CD4-positive, alpha-beta memory T cell (primary cell): ENCODE measurements at regions of chr12 and their contacts with region 1.

Region 1: DNA sequence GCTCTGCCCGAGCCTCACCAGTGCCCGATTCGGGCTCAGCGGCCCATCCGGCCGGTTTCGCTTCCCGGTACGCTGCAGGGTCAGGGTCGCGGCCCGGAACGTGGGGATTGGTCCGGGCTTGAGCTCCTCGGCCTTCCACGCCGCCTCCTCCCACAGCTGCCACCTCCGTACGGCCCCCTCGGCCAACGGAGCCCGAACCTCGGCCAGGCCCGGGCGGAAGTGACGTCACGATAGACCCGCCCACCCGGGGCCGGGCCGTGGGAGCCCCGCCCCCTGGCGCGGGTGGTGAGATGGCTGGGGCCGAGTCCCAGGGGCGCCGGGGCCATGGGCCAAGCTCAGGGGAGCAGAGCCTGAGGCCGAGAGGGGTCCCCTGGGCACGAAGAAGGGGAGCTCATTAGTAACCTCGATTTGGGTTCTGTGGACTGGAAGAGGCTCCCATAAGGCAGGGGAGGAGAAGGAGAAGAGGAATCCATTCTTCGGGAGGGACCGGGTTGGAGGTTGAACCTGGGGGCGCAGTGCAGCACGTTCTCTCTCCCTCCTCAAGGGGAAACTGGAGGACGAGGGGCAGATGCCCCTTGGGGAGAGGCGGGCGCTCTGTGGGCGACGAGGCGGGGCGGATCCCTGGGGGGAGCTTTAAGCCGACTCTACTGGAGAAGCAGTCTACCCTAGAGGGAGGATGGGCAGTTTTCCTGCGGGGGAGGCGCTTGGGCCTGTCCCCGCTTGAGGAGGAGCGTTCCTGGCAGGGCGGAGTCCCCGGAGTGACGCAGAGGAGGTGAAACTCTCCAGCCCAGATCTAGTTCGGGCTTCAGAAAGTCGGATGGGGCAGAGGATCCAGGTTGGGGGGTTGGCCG is at the start of gene MLF2:
- DNase-seq: peak; percentile 96 to 98 (median 97)
- H3K4me3 ChIP-seq: peak within 1 kb of the TSS; percentile 62 to 77
- H3K4me3 Mint-ChIP-seq: peak within 1 kb of the TSS; percentile 94 to 98 (median 96)
- H3K27ac ChIP-seq: peak within 1 kb of the TSS; percentile 84
- H3K27ac Mint-ChIP-seq: peak within 1 kb of the TSS; percentile 99 to 100 (median 99)
- H3K4me1 ChIP-seq: peaks cover 13% of the 10 kb centered on the region
- H3K4me1 Mint-ChIP-seq: peaks cover 10 to 24% (median 17%) of the 10 kb centered on the region in 4 donors
- H3K27me3 ChIP-seq: no peaks in the 10 kb centered on the region
- H3K27me3 Mint-ChIP-seq: peaks cover 0 to 1% of the 10 kb centered on the region in 2 donors
- total RNA-seq, gene MLF2: 79.8 to 80.3 TPM

Region 2: GRCh38 chr12:6632026-6632983 is 120.8 kb before region 1 on chr12:
- CTCF ChIA-PET with region 1: interaction called, 10 read pairs
- POLR2A ChIA-PET with region 1: no interaction called
- intact Hi-C with region 1: no loop called
- DNase-seq: peak; percentile 52 to 66 (median 62)
- H3K4me3 ChIP-seq: no peak overlapping the region
- H3K4me3 Mint-ChIP-seq: peak overlapping the region; percentile 82 to 93 (median 88)
- H3K27ac ChIP-seq: peak overlapping the region; percentile 63
- H3K27ac Mint-ChIP-seq: peak overlapping the region; percentile 91 to 98 (median 97)
- H3K4me1 ChIP-seq: peaks cover 50% of the 10 kb centered on the region
- H3K4me1 Mint-ChIP-seq: peaks cover 35 to 70% (median 52%) of the 10 kb centered on the region in 4 donors
- H3K27me3 ChIP-seq: no peaks in the 10 kb centered on the region
- H3K27me3 Mint-ChIP-seq: no peaks in the 10 kb centered on the region

Region 3: GRCh38 chr12:6647083-6647604 is 106.0 kb before region 1 on chr12 and contains the start of gene ACRBP:
- CTCF ChIA-PET with region 1: no interaction called
- POLR2A ChIA-PET with region 1: no interaction called
- intact Hi-C with region 1: no loop called
- DNase-seq: no peak
- H3K4me3 ChIP-seq: no peak within 1 kb of the TSS
- H3K4me3 Mint-ChIP-seq: peak within 1 kb of the TSS; percentile 17 to 77 (median 48)
- H3K27ac ChIP-seq: no peak within 1 kb of the TSS
- H3K27ac Mint-ChIP-seq: peak within 1 kb of the TSS in 2 of 7 donors; percentile 43 to 46
- H3K4me1 ChIP-seq: peaks cover 9% of the 10 kb centered on the region
- H3K4me1 Mint-ChIP-seq: peaks cover 5 to 16% (median 7%) of the 10 kb centered on the region in 4 donors
- H3K27me3 ChIP-seq: no peaks in the 10 kb centered on the region
- H3K27me3 Mint-ChIP-seq: peaks cover 0 to 5% of the 10 kb centered on the region in 2 donors
- total RNA-seq, gene ACRBP: 13.9 to 16.3 TPM

Region 4: GRCh38 chr12:6764011-6764828 is 11.1 kb after region 1 on chr12:
- CTCF ChIA-PET with region 1: interaction called, 343 read pairs
- POLR2A ChIA-PET with region 1: interaction called, 44 read pairs
- intact Hi-C with region 1: loop called (anchors 1 kb)
- DNase-seq: peak; percentile 47 to 79 (median 56)
- H3K4me3 ChIP-seq: no peak overlapping the region
- H3K4me3 Mint-ChIP-seq: peak overlapping the region; percentile 3 to 72 (median 62)
- H3K27ac ChIP-seq: no peak overlapping the region
- H3K27ac Mint-ChIP-seq: peak overlapping the region in 2 of 7 donors; percentile 31 to 46
- H3K4me1 ChIP-seq: peaks cover 27% of the 10 kb centered on the region
- H3K4me1 Mint-ChIP-seq: peaks cover 15 to 40% (median 28%) of the 10 kb centered on the region in 4 donors
- H3K27me3 ChIP-seq: peaks cover 15% of the 10 kb centered on the region
- H3K27me3 Mint-ChIP-seq: peaks cover 16 to 25% of the 10 kb centered on the region in 2 donors

Region 5: DNA sequence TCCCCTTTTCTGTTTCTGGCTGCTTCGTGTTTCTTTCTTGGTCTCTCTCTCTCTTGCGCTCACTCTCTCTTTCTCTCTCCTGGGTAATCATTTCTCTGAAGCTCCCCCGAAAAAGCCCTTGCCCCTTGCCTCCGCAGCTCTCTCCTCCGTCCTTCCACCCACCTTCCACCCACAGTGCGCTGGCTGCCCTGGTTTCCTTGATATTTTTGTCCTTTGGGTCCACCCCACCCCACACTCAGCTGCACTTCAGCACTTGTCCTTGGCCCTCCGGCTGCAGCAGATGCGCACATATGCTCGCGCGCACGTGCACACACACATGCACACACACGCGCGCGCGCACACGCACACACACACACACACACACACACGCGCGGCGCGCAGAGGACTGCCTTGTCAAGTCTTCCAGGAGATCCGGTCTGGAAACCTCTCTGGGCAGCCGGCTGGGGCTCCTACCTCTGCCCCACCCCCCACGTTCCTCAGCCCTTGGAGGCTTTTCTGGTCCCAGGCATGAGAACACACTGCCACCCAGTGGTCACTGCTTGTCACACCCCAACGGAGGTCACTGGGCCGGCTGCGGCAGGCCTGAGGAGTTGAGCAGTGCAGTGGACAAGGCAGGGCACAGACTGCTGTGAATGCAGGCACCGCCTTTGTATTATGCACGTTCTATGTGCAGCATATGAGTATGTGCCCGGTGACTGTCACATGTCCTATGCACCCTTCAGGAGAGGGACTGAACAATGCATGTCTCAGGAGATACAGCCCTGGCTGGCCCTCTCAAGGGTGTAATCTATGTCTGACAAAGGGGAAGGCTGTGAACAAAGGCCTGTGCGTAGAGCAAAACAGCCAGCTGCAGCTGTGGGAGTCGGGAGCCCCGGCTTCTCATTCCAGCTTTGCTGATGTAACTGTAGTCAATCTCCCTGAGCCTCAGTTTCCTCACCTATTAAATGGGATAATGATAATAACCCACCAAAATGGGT is 25.7 kb after region 1 on chr12:
- CTCF ChIA-PET with region 1: interaction called, 343 read pairs
- POLR2A ChIA-PET with region 1: interaction called, 44 read pairs
- intact Hi-C with region 1: loop called (anchors 1 kb)
- DNase-seq: peak; percentile 84 to 90 (median 84)
- H3K4me3 ChIP-seq: peak overlapping the region in 1 of 2 donors; percentile 58
- H3K4me3 Mint-ChIP-seq: peak overlapping the region; percentile 67 to 97 (median 86)
- H3K27ac ChIP-seq: peak overlapping the region; percentile 6
- H3K27ac Mint-ChIP-seq: peak overlapping the region; percentile 49 to 98 (median 90)
- H3K4me1 ChIP-seq: peaks cover 28% of the 10 kb centered on the region
- H3K4me1 Mint-ChIP-seq: peaks cover 22 to 66% (median 45%) of the 10 kb centered on the region in 4 donors
- H3K27me3 ChIP-seq: peaks cover 6% of the 10 kb centered on the region
- H3K27me3 Mint-ChIP-seq: peaks cover 6 to 21% of the 10 kb centered on the region in 2 donors

Region 6: GRCh38 chr12:6792522-6793201 is 39.5 kb after region 1 on chr12:
- CTCF ChIA-PET with region 1: interaction called, 343 read pairs
- POLR2A ChIA-PET with region 1: interaction called, 36 read pairs
- intact Hi-C with region 1: loop called (anchors 1 kb)
- DNase-seq: peak; percentile 59 to 73 (median 66)
- H3K4me3 ChIP-seq: peak overlapping the region; percentile 79
- H3K4me3 Mint-ChIP-seq: peak overlapping the region; percentile 95 to 99 (median 98)
- H3K27ac ChIP-seq: peak overlapping the region; percentile 83
- H3K27ac Mint-ChIP-seq: peak overlapping the region; percentile 90 to 99 (median 98)
- H3K4me1 ChIP-seq: peaks cover 55% of the 10 kb centered on the region
- H3K4me1 Mint-ChIP-seq: peaks cover 50 to 92% (median 66%) of the 10 kb centered on the region in 4 donors
- H3K27me3 ChIP-seq: no peaks in the 10 kb centered on the region
- H3K27me3 Mint-ChIP-seq: no peaks in the 10 kb centered on the region

Region 7: DNA sequence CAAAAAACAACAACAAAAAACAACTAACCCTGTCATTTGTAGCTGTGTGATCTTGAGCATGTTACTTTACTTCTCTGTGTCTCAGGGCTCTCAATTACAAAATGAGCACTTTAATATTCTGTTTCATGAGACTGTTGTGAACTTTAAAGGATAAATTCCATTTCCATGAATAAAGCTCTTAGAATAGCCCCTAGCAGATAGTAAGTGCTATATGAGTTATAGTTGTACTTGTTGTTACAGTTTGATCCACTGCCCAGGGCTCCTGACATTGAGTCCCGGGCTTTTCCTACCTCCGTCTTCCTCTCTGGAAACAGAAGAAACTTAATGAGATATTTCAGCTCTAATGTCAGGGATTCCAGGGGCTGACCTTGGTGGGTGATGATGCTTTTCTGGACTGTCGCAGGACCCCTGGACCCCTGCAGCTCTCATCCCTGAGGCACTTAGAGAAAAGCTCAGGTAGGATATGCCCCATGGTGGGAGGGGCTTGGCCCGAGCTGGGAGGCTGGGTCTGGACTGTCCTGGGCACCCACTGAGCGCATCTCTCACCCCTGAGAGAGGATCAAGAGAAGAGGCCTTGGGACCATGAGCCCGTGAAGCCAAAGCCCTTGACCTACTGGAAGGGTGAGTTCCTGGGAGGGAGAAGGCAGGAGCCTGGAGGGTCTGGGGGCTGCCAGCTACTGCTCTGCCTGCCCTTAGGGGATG is 80.2 kb after region 1 on chr12:
- CTCF ChIA-PET with region 1: interaction called, 72 read pairs
- POLR2A ChIA-PET with region 1: interaction called, 26 read pairs
- intact Hi-C with region 1: loop called (anchors 1 kb)
- DNase-seq: no peak
- H3K4me3 ChIP-seq: no peak overlapping the region
- H3K4me3 Mint-ChIP-seq: peak overlapping the region in 1 of 8 donors; percentile 25
- H3K27ac ChIP-seq: no peak overlapping the region
- H3K27ac Mint-ChIP-seq: no peak overlapping the region
- H3K4me1 ChIP-seq: peaks cover 16% of the 10 kb centered on the region
- H3K4me1 Mint-ChIP-seq: peaks cover 2 to 12% (median 7%) of the 10 kb centered on the region in 4 donors
- H3K27me3 ChIP-seq: peaks cover 8% of the 10 kb centered on the region
- H3K27me3 Mint-ChIP-seq: peaks cover 1 to 8% of the 10 kb centered on the region in 2 donors

Region 8: GRCh38 chr12:6867413-6868210 is 114.5 kb after region 1 on chr12 and contains the start of gene TPI1:
- CTCF ChIA-PET with region 1: interaction called, 10 read pairs
- POLR2A ChIA-PET with region 1: interaction called, 19 read pairs
- intact Hi-C with region 1: loop called (anchors 1 kb)
- DNase-seq: peak; percentile 59 to 68 (median 62)
- H3K4me3 ChIP-seq: peak within 1 kb of the TSS; percentile 36 to 67
- H3K4me3 Mint-ChIP-seq: peak within 1 kb of the TSS; percentile 89 to 96 (median 92)
- H3K27ac ChIP-seq: peak within 1 kb of the TSS; percentile 69
- H3K27ac Mint-ChIP-seq: peak within 1 kb of the TSS; percentile 91 to 97 (median 93)
- H3K4me1 ChIP-seq: peaks cover 51% of the 10 kb centered on the region
- H3K4me1 Mint-ChIP-seq: peaks cover 33 to 58% (median 48%) of the 10 kb centered on the region in 4 donors
- H3K27me3 ChIP-seq: no peaks in the 10 kb centered on the region
- H3K27me3 Mint-ChIP-seq: no peaks in the 10 kb centered on the region
- total RNA-seq, gene TPI1: 155 to 164 TPM